Calu3 (cell line): ENCODE measurements at regions of chr4 and their contacts with region 1.

Region 1: GRCh38 chr4:138222046-138222445 is 20.1 kb downstream of the SLC7A11 start:
- DNase-seq: no peak
- H3K4me3 Mint-ChIP-seq: peak overlapping the region; percentile 34
- H3K27ac Mint-ChIP-seq: peak overlapping the region; percentile 93
- H3K4me1 Mint-ChIP-seq: peaks cover 42% of the 10 kb centered on the region
- H3K27me3 Mint-ChIP-seq: no peaks in the 10 kb centered on the region
- CTCF ChIP-seq: no peak

Region 2: DNA sequence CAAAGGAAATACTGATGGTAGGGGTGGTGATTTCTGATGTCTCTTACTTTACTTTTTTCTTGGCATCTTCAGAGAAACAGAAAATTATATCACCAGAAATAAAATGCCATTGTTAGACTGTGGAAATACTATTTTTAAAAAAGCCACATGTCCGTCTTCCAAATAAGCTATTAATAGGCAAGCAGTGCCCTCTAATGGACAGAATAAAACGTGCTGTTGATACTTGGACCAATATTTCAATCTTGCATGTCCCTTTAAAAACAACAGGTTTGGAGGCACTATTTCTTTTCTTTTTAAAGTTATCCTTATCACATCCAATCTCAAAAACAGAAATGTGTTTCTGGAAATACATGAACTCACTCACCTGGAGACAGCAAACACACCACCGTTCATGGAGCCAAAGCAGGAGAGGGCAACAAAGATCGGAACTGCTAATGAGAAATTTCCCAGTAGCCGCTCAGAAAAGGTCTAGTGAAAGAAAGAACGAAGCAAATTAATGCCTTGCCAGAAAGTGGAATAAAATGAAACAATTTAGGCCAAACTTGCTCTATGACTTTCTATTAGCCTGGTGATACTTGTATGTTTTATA is 39.1 kb before region 1 on chr4:
- CTCF ChIA-PET with region 1: no interaction called
- intact Hi-C with region 1: no loop called
- DNase-seq: peak; percentile 24
- H3K4me3 Mint-ChIP-seq: no peak overlapping the region
- H3K27ac Mint-ChIP-seq: peak overlapping the region; percentile 58
- H3K4me1 Mint-ChIP-seq: peaks cover 39% of the 10 kb centered on the region
- H3K27me3 Mint-ChIP-seq: no peaks in the 10 kb centered on the region
- CTCF ChIP-seq: peak; percentile 30

Region 3: GRCh38 chr4:138259801-138260200 is 37.8 kb after region 1 on chr4:
- CTCF ChIA-PET with region 1: no interaction called
- intact Hi-C with region 1: no loop called
- DNase-seq: no peak
- H3K4me3 Mint-ChIP-seq: no peak overlapping the region
- H3K27ac Mint-ChIP-seq: no peak overlapping the region
- H3K4me1 Mint-ChIP-seq: peaks cover 9% of the 10 kb centered on the region
- H3K27me3 Mint-ChIP-seq: no peaks in the 10 kb centered on the region
- CTCF ChIP-seq: no peak

Region 4: DNA sequence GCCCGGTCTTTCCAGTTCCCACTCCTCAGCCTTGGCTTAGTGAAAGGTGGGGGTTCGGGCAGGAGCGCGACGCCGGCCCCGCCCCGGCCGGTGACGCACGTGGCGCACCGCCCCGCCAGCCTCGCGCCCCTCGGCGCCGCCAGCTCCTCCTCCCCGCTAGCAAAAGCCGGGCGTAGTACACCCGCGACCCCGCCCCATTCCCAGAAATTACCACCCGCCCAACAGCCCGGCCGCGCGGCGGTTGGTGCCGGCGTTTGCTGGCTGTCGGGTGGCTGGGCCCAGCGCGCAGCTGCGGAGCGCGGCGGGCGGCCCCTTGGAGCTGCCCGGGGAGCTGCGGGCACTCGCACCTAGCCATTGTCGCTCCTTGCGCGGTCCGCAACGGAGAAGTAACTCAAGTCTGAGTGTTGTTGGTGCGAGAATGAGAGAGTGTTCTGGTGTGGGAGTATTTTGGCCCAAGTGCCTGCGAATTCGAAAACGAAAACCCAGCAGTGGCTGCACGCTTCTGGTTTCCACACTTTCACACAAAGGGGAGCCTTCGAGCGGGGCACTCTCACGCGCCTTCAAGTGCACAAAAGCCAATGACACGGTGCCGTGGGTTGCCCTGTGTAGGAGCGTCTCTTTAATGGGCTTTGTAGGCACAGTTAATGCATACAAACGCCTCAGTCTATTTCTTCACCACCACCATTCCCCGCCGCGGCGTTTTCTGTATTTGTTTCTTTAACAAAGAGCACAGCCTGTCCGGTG is 956.0 kb after region 1 on chr4:
- CTCF ChIA-PET with region 1: no interaction called
- intact Hi-C with region 1: loop called (anchors 10 kb)
- DNase-seq: peak; percentile 93
- H3K4me3 Mint-ChIP-seq: peak overlapping the region; percentile 90
- H3K27ac Mint-ChIP-seq: peak overlapping the region; percentile 66
- H3K4me1 Mint-ChIP-seq: no peaks in the 10 kb centered on the region
- H3K27me3 Mint-ChIP-seq: no peaks in the 10 kb centered on the region
- CTCF ChIP-seq: no peak